Posterior vena cava (tissue), 2 donors: ENCODE measurements at regions of chr12 and their contacts with region 1.

Region 1: GRCh38 chr12:2739817-2740641 is 54.7 kb upstream of the FKBP4 start:
- DNase-seq: no peak

Region 2: GRCh38 chr12:2646341-2646740 is 93.7 kb before region 1 on chr12:
- intact Hi-C with region 1: loop called in 1 of 2 experiments (anchors 2 kb)
- DNase-seq: no peak

Region 3: DNA sequence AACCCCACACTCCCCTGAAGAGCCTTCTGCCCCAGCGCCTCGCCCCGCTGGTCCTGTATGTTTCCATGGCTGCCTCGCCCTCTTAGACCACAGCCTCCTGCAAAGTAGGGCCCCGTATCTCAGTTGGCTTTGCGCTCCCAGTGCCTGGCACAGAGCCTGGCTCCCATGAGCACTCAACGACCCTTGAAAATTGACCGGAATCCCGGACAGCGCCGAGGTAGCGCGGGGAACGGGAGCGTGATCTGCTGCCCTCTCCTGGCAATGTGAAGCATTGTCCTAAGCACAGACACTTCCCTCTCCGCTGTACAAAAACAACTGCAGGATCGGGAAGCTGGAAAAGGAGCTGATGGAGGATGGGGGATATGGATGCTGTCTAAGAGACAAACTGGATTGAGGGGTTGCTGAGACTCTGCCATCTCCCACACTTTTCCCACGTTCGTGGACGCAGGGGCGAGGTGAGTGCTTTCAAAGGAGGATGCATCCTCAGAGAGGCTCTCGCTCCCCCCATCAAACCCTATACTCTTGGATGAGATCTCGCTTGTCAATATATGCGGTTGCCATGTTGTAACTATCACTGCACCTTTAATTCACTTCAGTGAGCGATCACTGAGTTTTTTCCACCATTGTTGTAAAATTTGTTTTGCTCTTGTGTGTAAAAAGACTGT is 44.0 kb after region 1 on chr12:
- intact Hi-C with region 1: loop called in 1 of 2 experiments (anchors 10 kb)
- DNase-seq: peak; percentile 86